ENCODE measurements at regions of chr5 and their contacts with region 1.

Region 1: DNA sequence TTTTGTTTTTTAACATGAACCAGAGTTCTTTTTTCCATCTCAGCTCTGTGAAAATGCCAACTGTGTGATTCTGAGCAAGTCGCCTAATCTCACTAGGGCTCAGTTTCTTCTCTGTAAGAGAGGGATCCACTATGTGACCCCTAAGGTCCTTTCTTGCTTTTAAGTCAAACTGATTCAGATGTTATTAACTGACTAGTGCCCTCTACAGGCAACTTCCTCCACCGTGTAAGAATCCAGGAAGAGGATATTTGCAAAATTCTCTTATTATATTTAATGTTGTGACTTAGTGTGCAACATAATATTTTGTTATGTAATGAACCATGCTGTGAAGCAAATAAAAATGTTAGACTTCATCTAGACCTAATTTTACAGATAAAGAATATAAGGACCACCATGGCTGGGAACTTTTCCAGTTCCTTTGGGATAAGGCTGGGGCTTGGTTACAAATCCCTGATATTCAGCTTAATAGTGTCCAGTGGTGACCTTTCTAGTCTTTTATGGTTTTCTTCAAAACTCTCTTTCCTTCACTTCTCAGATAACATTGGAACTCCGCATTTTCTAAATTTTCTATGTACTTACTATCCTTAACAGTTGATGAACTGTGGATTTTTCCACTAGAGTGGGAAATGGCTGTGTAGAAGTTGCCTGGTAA is 244.7 kb downstream of the PIK3R1 start:
- DNase-seq: peak; percentile 83
- H3K4me3 Mint-ChIP-seq: no peak overlapping the region
- H3K27ac Mint-ChIP-seq: no peak overlapping the region
- H3K4me1 Mint-ChIP-seq: peaks cover 17% of the 10 kb centered on the region
- H3K27me3 Mint-ChIP-seq: peaks cover under 1% of the 10 kb centered on the region

Region 2: DNA sequence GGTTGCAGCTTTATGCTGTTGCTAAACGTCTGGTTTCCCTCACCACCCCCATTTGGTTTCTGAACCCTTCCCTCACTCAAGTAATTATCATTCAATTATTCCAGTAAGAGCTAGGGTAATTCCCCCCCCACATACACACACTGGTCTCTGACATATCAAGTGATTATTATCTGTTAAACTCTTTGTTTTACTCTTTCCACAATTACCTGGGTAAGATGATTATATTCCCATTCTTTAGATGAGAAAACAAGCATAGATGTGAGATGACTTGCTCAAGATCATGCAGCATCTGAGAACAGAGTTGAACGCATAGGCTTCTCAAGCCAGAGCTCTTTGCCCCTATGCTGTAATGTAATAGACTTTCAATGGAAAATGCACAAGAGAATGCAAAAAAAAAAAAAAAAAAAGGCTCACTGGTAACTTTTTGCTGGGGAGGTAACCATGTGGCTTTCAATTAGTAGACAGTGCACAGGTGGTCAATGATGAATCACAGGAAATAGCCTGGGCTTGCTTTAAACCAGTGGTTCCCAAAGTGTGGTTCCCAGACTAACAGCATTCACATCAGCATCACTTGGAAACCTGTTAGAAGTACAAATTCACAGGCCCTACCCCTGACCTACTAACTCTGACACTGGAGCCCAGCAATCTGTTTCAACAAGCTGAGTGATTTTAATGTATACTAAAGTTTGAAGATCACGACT is 157.1 kb before region 1 on chr5:
- intact Hi-C with region 1: loop called (anchors 5 kb)
- DNase-seq: no peak
- H3K4me3 Mint-ChIP-seq: peak overlapping the region; percentile 9
- H3K27ac Mint-ChIP-seq: peak overlapping the region; percentile 71
- H3K4me1 Mint-ChIP-seq: peaks cover 32% of the 10 kb centered on the region
- H3K27me3 Mint-ChIP-seq: peaks cover 8% of the 10 kb centered on the region

Region 3: DNA sequence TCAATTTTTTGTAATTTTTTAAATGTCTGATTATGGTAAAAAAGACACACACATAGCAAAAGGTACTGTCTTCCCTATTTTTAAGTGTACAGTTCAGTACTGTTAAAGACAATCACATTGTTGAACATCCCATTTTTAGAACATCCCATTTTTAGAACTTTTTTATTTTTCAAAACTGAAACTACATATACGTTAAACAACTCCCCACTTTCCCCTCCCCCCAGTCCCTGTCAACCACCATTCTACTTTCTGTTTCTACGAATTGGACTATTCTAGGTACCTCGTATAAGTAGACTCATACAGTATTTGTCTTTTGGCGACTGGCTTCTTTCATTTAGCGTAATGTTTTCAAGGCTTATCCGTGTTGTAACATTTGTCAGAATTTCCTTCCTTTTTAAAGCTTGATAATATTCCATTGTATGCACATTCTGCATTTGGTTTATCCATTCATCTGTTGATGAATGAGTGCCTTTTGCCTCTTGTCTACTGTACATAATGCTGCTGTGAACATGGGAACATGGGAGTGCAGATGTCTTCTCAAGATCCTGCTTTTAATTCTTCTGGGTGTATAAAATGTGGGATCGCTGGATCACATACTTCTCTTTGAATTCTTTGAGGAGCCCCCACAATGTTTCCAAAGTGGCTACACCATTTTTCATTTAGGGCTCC is 90.7 kb before region 1 on chr5:
- intact Hi-C with region 1: loop called (anchors 2 kb)
- DNase-seq: peak; percentile 90
- H3K4me3 Mint-ChIP-seq: peak overlapping the region; percentile 69
- H3K27ac Mint-ChIP-seq: peak overlapping the region; percentile 77
- H3K4me1 Mint-ChIP-seq: peaks cover 40% of the 10 kb centered on the region
- H3K27me3 Mint-ChIP-seq: no peaks in the 10 kb centered on the region

Region 4: GRCh38 chr5:68433923-68434879 is 26.1 kb before region 1 on chr5:
- intact Hi-C with region 1: loop called (anchors 1 kb)
- DNase-seq: peak; percentile 96
- H3K4me3 Mint-ChIP-seq: peak overlapping the region; percentile 66
- H3K27ac Mint-ChIP-seq: peak overlapping the region; percentile 84
- H3K4me1 Mint-ChIP-seq: peaks cover 54% of the 10 kb centered on the region
- H3K27me3 Mint-ChIP-seq: peaks cover 37% of the 10 kb centered on the region

Region 5: GRCh38 chr5:68884883-68885282 is 424.6 kb after region 1 on chr5:
- intact Hi-C with region 1: loop called (anchors 10 kb)
- DNase-seq: no peak
- H3K4me3 Mint-ChIP-seq: no peak overlapping the region
- H3K27ac Mint-ChIP-seq: no peak overlapping the region
- H3K4me1 Mint-ChIP-seq: peaks cover 25% of the 10 kb centered on the region
- H3K27me3 Mint-ChIP-seq: peaks cover 1% of the 10 kb centered on the region